Heart right ventricle (tissue), 16 donors: ENCODE measurements at regions of chr15 and their contacts with region 1.

Region 1: DNA sequence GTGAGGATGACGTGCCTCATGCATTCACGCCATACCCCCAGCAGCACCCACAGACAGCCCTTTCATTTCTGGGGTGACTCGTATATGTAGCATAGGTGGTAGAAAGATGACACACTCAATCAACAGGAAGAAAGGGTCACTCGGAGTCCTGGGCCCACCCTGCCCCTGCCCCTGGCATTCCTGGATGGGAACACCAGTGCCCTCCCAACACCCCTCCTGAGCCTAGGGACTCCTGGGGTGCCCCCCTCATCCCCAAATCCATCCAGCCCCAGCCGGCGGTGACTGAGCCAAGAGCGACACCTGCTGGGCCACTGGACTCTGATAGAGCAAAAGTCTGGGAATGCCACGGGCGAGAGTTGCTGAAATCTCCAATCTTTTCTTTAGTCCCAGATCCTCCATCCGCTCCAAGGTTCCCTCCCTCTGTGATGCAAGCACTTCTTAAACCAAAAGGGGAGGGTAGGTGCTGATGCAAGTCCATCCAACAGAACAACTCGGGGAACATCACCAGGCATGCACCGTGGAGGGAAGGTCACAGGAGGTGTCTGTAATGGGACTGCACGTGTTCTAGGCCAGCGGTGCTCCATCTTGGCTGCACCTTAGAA is 31.1 kb downstream of the ACAN start:
- DNase-seq: peak; percentile 30 to 44
- ATAC-seq: peak; percentile 44 to 82 (median 65)
- H3K4me3 ChIP-seq: no peak overlapping the region
- H3K27ac ChIP-seq: no peak overlapping the region
- H3K4me1 ChIP-seq: no peaks in the 10 kb centered on the region
- H3K27me3 ChIP-seq: peaks cover 0 to 7% (median 0%) of the 10 kb centered on the region in 7 donors
- CTCF ChIP-seq: peak in 8 of 9 donors; percentile 43 to 74 (median 64)

Region 2: DNA sequence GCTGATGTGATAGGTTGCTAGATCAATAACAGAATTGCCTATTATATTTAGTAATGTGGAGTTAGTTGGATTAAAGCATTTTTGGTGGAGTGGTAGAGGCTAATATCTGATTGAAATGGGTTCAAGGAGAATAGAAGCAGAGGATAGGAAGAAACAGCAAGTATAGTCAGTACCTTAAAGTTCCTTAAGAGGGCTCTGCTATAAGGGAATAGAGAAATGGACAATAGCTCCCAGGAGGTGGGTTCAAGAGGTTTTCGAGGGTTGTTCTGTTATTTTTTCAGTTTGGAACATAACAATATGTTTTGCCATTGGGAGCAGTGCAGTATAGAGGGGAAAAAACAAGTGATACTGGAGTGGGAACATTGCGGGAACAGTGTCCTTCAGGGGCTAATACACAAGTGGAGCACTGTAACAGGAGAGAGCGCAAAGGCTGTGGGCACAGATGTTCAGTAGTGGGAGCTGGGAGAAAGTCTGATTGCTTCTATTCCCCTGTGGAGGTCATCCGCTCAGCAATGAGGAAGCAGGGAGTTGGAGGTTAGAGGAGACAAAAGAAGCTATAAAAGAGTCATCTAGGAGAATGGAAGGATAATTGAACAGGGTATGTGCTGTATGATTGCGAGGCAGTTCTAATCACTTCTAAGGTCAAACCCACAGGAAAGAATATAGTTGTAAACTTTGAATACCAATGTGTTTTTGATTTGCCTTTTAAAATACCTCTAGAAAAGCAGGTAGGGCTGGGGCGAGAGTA is 363.5 kb before region 1 on chr15:
- intact Hi-C with region 1: loop called in 4 of 10 experiments (anchors 5 to 10 kb)
- DNase-seq: no peak
- ATAC-seq: no peak
- H3K4me3 ChIP-seq: no peak overlapping the region
- H3K27ac ChIP-seq: no peak overlapping the region
- H3K4me1 ChIP-seq: peaks cover 5 to 38% (median 22%) of the 10 kb centered on the region in 9 donors
- H3K27me3 ChIP-seq: no peaks in the 10 kb centered on the region
- CTCF ChIP-seq: no peak

Region 3: GRCh38 chr15:88476635-88477060 is 357.7 kb before region 1 on chr15:
- intact Hi-C with region 1: loop called in 4 of 10 experiments (anchors 5 to 10 kb)
- DNase-seq: peak in 1 of 2 donors; percentile 33
- ATAC-seq: peak; percentile 62 to 87 (median 80)
- H3K4me3 ChIP-seq: no peak overlapping the region
- H3K27ac ChIP-seq: peak overlapping the region in 4 of 10 donors; percentile 28 to 57 (median 46)
- H3K4me1 ChIP-seq: peaks cover 0 to 19% (median 0%) of the 10 kb centered on the region in 9 donors
- H3K27me3 ChIP-seq: no peaks in the 10 kb centered on the region
- CTCF ChIP-seq: peak in 8 of 9 donors; percentile 42 to 65 (median 52)

Region 4: DNA sequence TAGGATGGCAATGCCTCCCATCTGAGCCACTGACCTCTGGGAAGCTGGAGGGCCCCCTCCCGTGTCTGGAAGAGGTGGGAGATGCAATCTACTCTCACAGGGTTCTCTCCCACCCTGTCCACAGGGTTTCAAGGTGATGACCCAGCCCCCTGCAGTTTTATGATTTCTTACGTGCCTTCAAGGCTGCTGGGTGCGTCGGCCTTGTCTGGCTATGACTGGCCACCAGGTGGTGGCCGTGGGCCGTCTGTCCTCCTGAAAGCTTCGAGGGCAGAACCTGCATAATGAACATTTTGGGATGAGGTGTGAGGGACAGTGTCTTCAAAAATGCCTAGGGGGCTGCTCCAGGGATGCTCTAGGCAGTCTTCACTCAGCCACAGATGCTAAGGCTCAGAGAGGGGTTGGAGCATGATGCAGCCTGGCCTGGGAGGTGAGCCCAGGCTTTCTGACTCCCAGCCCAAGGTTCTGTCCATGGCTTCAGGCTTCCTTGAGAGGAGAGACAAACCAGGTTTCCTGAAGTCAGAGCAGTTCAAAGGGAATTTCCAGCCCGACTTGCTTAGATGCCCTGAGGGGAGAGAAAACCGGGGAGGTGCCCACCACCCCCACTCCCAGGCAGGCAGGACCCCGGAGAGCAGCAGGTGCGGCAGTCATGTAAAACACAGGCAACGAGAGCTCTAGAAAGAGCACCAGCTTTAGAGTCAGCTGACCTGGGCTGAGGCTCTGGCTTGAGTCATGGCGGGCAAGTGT is 176.8 kb before region 1 on chr15:
- intact Hi-C with region 1: loop called (anchors 1 to 5 kb)
- DNase-seq: no peak
- ATAC-seq: peak in 6 of 8 donors; percentile 32 to 58 (median 54)
- H3K4me3 ChIP-seq: no peak overlapping the region
- H3K27ac ChIP-seq: no peak overlapping the region
- H3K4me1 ChIP-seq: peaks cover 0 to 14% (median 4%) of the 10 kb centered on the region in 9 donors
- H3K27me3 ChIP-seq: no peaks in the 10 kb centered on the region
- CTCF ChIP-seq: peak; percentile 53 to 77 (median 74)

Region 5: GRCh38 chr15:88725305-88726210 is 108.8 kb before region 1 on chr15:
- intact Hi-C with region 1: no loop called
- DNase-seq: no peak
- ATAC-seq: no peak
- H3K4me3 ChIP-seq: no peak overlapping the region
- H3K27ac ChIP-seq: no peak overlapping the region
- H3K4me1 ChIP-seq: no peaks in the 10 kb centered on the region
- H3K27me3 ChIP-seq: peaks cover 0 to 13% (median 0%) of the 10 kb centered on the region in 7 donors
- CTCF ChIP-seq: no peak

Region 6: DNA sequence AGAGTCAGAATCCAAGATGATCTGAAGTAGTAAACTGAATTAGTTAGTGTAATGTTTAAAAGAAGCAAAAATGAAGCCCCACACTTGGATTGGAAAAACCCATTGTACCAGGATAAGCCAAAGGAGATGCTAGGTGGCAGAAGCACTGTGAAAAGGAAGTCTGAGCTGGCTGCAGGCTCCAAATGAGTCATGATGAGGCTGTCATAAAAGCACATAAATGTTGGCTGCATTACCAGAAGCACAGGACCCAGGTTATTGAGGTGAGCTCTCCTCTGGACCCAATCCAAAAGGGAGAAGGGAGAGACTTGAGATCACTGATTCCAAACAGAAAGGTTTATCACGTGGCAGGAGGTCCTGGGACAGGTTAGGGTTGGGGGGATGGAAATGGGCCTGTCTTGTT is 34.3 kb before region 1 on chr15:
- intact Hi-C with region 1: no loop called
- DNase-seq: no peak
- ATAC-seq: no peak
- H3K4me3 ChIP-seq: no peak overlapping the region
- H3K27ac ChIP-seq: no peak overlapping the region
- H3K4me1 ChIP-seq: peaks cover 0 to 11% (median 3%) of the 10 kb centered on the region in 9 donors
- H3K27me3 ChIP-seq: peaks cover 0 to 95% (median 83%) of the 10 kb centered on the region in 7 donors
- CTCF ChIP-seq: no peak